Activated naive CD8-positive, alpha-beta T cell treated with anti-CD3 and anti-CD28 coated beads, Interleukin-2, amount 10 ng/mL, durations not matched to agents 7 days and 5 days (primary cell): ENCODE measurements at regions of chrX and their contacts with region 1.

Region 1: GRCh38 chrX:150568320-150569154 is at the start of gene MTM1:
- DNase-seq: peak; percentile 91
- ATAC-seq: peak; percentile 87
- H3K4me3 Mint-ChIP-seq: peak within 1 kb of the TSS; percentile 86
- H3K27ac Mint-ChIP-seq: peak within 1 kb of the TSS; percentile 88
- H3K4me1 Mint-ChIP-seq: peaks cover 28% of the 10 kb centered on the region
- H3K27me3 Mint-ChIP-seq: no peaks in the 10 kb centered on the region
- total RNA-seq, gene MTM1: 30.5 to 34.5 TPM

Region 2: DNA sequence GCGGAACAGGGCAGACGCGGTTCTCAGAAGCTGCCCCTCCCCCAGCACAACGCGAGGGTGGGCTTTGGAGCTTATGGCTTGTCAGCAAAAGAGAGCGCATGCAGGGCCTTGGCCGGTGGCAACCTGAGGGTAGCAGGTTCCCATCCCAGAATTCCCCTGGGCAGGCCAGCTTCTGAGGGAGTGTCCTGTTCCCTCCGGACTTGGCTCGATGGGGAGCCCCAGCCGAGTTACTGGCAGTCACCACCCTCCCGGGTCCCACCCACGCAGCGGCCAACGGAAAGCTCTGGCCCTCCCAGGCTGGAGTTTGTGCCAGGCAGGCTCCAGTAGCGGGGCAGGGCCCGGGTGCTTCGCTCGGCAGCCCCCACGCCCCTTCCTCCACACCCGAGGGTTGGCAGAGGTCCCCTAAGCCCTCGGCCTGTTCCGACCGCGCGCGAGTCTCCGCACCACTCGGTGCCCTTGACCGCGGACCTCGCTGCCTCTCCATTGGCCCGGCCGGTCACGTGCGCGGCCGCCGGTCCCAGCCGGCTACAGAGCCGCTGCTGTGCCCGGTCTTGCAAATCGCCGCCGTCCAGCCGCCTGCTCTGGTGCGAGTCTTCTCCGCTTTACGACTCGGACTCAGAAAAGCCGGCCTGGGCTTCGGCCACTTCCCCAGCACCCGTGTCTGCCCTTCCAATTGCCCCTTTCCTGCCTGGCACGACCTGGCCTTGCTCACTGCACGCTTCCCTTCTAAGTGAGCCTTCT is 21.0 kb before region 1 on chrX:
- POLR2A ChIA-PET with region 1: interaction called, 47 read pairs
- DNase-seq: peak; percentile 34
- ATAC-seq: peak; percentile 22
- H3K4me3 Mint-ChIP-seq: peak overlapping the region; percentile 79
- H3K27ac Mint-ChIP-seq: peak overlapping the region; percentile 88
- H3K4me1 Mint-ChIP-seq: peaks cover 22% of the 10 kb centered on the region
- H3K27me3 Mint-ChIP-seq: no peaks in the 10 kb centered on the region

Region 3: DNA sequence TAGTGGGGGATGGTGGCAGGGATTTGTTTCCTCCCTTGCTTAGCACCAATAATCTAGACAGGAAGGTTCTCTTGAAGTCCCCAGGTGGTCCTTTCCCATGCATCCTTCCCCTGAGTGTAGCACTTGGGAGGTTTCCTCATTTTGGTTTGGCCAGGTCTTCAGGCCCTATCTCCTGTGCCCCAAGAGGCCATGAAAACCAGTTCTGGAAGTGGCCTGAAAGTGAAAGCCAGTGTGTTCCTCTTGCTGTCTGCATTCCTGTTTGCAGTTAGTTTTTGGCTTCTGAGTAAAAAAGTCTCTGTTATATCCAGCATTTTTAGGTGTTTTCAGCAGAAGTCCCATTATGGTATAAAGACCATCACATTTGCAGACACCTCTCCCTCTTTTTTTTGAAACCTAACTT is 59.4 kb after region 1 on chrX:
- POLR2A ChIA-PET with region 1: no interaction called
- DNase-seq: no peak
- ATAC-seq: no peak
- H3K4me3 Mint-ChIP-seq: no peak overlapping the region
- H3K27ac Mint-ChIP-seq: no peak overlapping the region
- H3K4me1 Mint-ChIP-seq: peaks cover 7% of the 10 kb centered on the region
- H3K27me3 Mint-ChIP-seq: no peaks in the 10 kb centered on the region